ENCODE measurements at regions of chr12 and their contacts with region 1.

Region 1: GRCh38 chr12:3604748-3605586 is 114.0 kb downstream of the PRMT8 start:
- DNase-seq: peak; percentile 66 to 91 (median 88)
- ATAC-seq: peak; percentile 57 to 61
- H3K4me3 ChIP-seq: no peak overlapping the region
- H3K27ac ChIP-seq: peak overlapping the region; percentile 88
- H3K4me1 ChIP-seq: peaks cover 5% of the 10 kb centered on the region
- H3K27me3 ChIP-seq: no peaks in the 10 kb centered on the region

Region 2: GRCh38 chr12:3342056-3342455 is 262.9 kb before region 1 on chr12:
- intact Hi-C with region 1: no loop called
- DNase-seq: peak; percentile 57 to 85 (median 78)
- ATAC-seq: peak; percentile 85 to 90
- H3K4me3 ChIP-seq: no peak overlapping the region
- H3K27ac ChIP-seq: peak overlapping the region; percentile 57
- H3K4me1 ChIP-seq: peaks cover 5% of the 10 kb centered on the region
- H3K27me3 ChIP-seq: no peaks in the 10 kb centered on the region

Region 3: GRCh38 chr12:3491938-3492792 is 112.8 kb before region 1 on chr12:
- intact Hi-C with region 1: loop called in 1 of 4 experiments (anchors 10 kb)
- DNase-seq: peak; percentile 62 to 87 (median 86)
- ATAC-seq: peak; percentile 80 to 86
- H3K4me3 ChIP-seq: peak overlapping the region; percentile 47
- H3K27ac ChIP-seq: no peak overlapping the region
- H3K4me1 ChIP-seq: no peaks in the 10 kb centered on the region
- H3K27me3 ChIP-seq: no peaks in the 10 kb centered on the region